Activated T-helper 2 cell treated with anti-CD3 and anti-CD28 coated beads, Interferon-gamma antibody, Interleukin-2, Interleukin-4, amounts not matched to agents 10 μg/mL and 5 μg/mL and 100 μg/mL, durations not matched to agents 14 hours and 24 hours and 36 hours (primary cell): ENCODE measurements at regions of chr6 and their contacts with region 1.

Region 1: GRCh38 chr6:490251-491037 is 98.9 kb downstream of the IRF4 start:
- DNase-seq: no peak
- H3K4me3 Mint-ChIP-seq: peak overlapping the region; percentile 46
- H3K27ac Mint-ChIP-seq: peak overlapping the region; percentile 99
- H3K4me1 Mint-ChIP-seq: peaks cover 84% of the 10 kb centered on the region
- H3K27me3 Mint-ChIP-seq: no peaks in the 10 kb centered on the region

Region 2: GRCh38 chr6:227074-227782 is 263.2 kb before region 1 on chr6:
- intact Hi-C with region 1: loop called (anchors 5 kb)
- DNase-seq: no peak
- H3K4me3 Mint-ChIP-seq: no peak overlapping the region
- H3K27ac Mint-ChIP-seq: peak overlapping the region; percentile 28
- H3K4me1 Mint-ChIP-seq: peaks cover 76% of the 10 kb centered on the region
- H3K27me3 Mint-ChIP-seq: no peaks in the 10 kb centered on the region

Region 3: GRCh38 chr6:336159-337019 is 154.1 kb before region 1 on chr6:
- intact Hi-C with region 1: loop called (anchors 2 kb)
- DNase-seq: peak; percentile 23
- H3K4me3 Mint-ChIP-seq: peak overlapping the region; percentile 35
- H3K27ac Mint-ChIP-seq: peak overlapping the region; percentile 74
- H3K4me1 Mint-ChIP-seq: peaks cover 55% of the 10 kb centered on the region
- H3K27me3 Mint-ChIP-seq: no peaks in the 10 kb centered on the region

Region 4: GRCh38 chr6:411421-412145 is 78.9 kb before region 1 on chr6:
- intact Hi-C with region 1: no loop called
- DNase-seq: no peak
- H3K4me3 Mint-ChIP-seq: no peak overlapping the region
- H3K27ac Mint-ChIP-seq: peak overlapping the region; percentile 73
- H3K4me1 Mint-ChIP-seq: peaks cover 56% of the 10 kb centered on the region
- H3K27me3 Mint-ChIP-seq: no peaks in the 10 kb centered on the region

Region 5: GRCh38 chr6:422433-423054 is 67.9 kb before region 1 on chr6:
- intact Hi-C with region 1: loop called (anchors 2 kb)
- DNase-seq: peak; percentile 52
- H3K4me3 Mint-ChIP-seq: no peak overlapping the region
- H3K27ac Mint-ChIP-seq: peak overlapping the region; percentile 91
- H3K4me1 Mint-ChIP-seq: peaks cover 30% of the 10 kb centered on the region
- H3K27me3 Mint-ChIP-seq: no peaks in the 10 kb centered on the region

Region 6: DNA sequence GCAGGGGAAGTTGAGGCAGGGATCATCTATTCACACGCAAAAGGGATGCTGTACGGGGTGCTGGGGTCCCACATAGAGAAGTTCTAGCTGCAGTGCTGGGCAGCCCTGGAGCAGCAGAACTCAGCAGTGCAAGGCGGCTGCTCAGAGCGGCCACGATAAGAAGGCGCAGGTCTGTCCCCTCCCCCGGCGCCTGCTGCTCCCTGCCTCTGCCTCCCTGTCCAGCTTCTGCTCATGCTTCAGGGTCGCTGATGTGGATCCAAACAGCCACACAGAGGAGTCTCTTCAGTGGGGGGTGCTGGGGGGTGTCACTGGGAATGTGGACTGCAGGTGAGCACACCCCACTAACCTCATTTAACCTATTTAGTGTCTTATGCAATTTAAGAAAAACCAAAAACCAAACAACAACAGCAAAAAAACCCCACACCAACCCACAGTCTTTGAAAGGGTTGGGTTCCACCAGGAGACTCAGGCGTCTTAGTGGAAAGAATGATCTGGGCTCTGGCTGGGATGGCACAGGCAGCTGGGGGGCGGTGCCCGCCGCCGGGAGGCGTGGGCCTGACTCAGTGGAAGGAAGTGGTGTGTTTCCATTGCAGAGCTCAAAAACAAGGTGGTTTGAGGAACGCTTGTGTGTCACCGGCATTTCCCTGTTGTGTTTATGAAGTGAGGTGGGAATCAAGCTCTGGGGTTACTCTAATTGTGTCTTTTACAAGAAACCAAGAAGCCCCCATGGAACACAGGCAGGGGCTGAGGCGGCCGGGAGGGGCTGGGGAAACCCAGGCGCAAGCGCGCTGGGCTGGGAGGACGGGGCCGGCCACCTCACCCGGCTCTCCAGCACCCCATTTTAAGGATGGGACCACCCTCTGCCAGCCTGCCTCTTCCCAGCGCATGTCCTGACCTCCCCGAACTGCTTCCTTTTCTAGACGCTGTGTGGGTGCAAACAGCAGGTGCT is 43.8 kb before region 1 on chr6:
- intact Hi-C with region 1: loop called (anchors 1 kb)
- DNase-seq: peak; percentile 88
- H3K4me3 Mint-ChIP-seq: peak overlapping the region; percentile 40
- H3K27ac Mint-ChIP-seq: peak overlapping the region; percentile 91
- H3K4me1 Mint-ChIP-seq: peaks cover 54% of the 10 kb centered on the region
- H3K27me3 Mint-ChIP-seq: no peaks in the 10 kb centered on the region

Region 7: GRCh38 chr6:506508-506907 is 16.1 kb after region 1 on chr6:
- intact Hi-C with region 1: loop called (anchors 1 kb)
- DNase-seq: no peak
- H3K4me3 Mint-ChIP-seq: peak overlapping the region; percentile 38
- H3K27ac Mint-ChIP-seq: peak overlapping the region; percentile 95
- H3K4me1 Mint-ChIP-seq: peaks cover 94% of the 10 kb centered on the region
- H3K27me3 Mint-ChIP-seq: no peaks in the 10 kb centered on the region

Region 8: DNA sequence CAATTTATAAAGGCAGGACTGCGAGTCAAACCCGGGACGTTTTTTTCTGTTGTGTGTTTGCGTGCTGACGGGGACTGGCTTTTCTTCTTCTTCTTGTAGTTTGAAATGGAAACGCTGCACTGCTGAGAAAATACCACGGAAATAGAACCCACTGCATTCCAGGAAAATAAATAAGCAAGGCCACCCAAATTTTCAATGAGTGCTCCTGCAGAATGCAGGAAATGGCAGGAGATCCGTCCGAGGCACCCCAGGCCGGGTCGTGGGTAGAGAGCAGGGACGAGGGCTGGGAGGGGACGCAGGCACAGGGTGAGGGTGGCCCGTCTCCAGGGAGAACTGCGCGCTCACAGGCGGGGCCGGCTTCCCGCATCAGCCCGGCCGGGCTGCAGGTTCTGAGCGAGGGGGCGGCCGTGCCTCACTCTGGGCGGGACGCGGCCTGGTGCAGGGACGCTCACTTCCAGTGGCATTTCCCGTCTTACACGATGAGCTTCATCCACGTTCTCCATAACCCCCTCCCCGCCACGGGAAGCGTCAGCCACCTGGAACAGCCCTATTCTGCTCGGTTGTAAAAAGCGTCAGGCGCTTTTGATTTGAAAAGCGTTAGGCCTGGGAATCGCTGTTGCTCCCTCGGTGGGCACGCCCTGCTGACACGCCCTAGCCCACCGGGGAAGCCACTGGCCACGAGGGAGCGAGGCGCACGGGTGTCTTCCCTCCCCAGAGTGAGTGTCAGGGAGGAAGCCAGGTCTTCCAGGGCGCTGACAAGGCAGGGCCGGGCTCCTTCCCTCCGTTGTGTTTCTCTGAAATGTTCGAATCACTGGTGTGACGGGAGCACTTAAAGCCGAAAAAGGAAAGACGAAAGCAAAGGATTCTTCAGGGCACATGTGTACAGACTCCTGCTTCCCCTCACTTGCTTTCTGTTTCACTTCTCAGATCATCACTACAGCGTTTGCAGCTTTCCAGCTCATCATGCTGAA is 220.4 kb after region 1 on chr6:
- intact Hi-C with region 1: loop called (anchors 5 kb)
- DNase-seq: peak; percentile 60
- H3K4me3 Mint-ChIP-seq: peak overlapping the region; percentile 96
- H3K27ac Mint-ChIP-seq: peak overlapping the region; percentile 99
- H3K4me1 Mint-ChIP-seq: peaks cover 44% of the 10 kb centered on the region
- H3K27me3 Mint-ChIP-seq: peaks cover 4% of the 10 kb centered on the region